ENCODE measurements at regions of chr1 and their contacts with region 1.

Region 1: GRCh38 chr1:20786253-20787028 is 666 bp downstream of the HP1BP3 start:
- DNase-seq: peak; percentile 92 to 98 (median 96)
- ATAC-seq: peak; percentile 74 to 77
- H3K4me3 Mint-ChIP-seq: peak overlapping the region; percentile 91 to 100 (median 98)
- H3K27ac Mint-ChIP-seq: peak overlapping the region; percentile 75 to 99 (median 97)
- H3K4me1 Mint-ChIP-seq: peaks cover 10 to 46% (median 32%) of the 10 kb centered on the region in 4 donors
- H3K27me3 Mint-ChIP-seq: no peaks in the 10 kb centered on the region

Region 2: DNA sequence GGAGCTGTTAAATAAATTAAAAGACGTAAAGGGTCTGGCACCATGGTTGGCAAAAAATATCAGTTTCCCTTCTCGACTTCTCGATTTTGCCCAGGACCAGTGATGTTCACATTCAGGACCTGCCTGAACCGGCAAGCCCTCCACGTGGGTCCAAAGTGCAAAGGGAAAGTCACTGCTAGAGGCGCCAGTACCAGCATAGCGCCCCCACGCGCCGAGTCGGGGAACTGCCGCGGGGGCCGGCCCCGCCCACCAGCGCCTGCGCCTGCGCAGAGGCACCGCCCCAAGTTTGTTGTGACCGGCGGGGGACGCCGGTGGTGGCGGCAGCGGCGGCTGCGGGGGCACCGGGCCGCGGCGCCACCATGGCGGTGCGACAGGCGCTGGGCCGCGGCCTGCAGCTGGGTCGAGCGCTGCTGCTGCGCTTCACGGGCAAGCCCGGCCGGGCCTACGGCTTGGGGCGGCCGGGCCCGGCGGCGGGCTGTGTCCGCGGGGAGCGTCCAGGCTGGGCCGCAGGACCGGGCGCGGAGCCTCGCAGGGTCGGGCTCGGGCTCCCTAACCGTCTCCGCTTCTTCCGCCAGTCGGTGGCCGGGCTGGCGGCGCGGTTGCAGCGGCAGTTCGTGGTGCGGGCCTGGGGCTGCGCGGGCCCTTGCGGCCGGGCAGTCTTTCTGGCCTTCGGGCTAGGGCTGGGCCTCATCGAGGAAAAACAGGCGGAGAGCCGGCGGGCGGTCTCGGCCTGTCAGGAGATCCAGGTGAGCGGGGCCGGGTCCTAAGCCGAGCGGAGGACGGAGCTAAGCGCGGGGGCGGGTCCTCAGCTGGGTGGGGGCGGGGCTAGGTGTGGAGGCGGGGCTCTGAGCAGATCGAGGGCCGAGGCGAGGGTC is 153.0 kb before region 1 on chr1 and contains the start of gene PINK1:
- POLR2A ChIA-PET with region 1: interaction called, 13 read pairs
- DNase-seq: peak; percentile 83 to 98 (median 87)
- ATAC-seq: peak; percentile 88
- H3K4me3 Mint-ChIP-seq: peak within 1 kb of the TSS; percentile 89 to 97 (median 95)
- H3K27ac Mint-ChIP-seq: peak within 1 kb of the TSS in 9 of 10 donors; percentile 83 to 96 (median 95)
- H3K4me1 Mint-ChIP-seq: peaks cover 8 to 24% (median 13%) of the 10 kb centered on the region in 4 donors
- H3K27me3 Mint-ChIP-seq: no peaks in the 10 kb centered on the region
- polyA plus RNA-seq, gene PINK1: 18.4 to 26.3 (median 19.5) TPM

Region 3: GRCh38 chr1:20661207-20662109 is 125.0 kb before region 1 on chr1 and contains the start of gene DDOST:
- POLR2A ChIA-PET with region 1: interaction called, 23 read pairs
- DNase-seq: peak; percentile 85 to 97 (median 94)
- ATAC-seq: peak; percentile 96
- H3K4me3 Mint-ChIP-seq: peak within 1 kb of the TSS; percentile 97 to 100 (median 99)
- H3K27ac Mint-ChIP-seq: peak within 1 kb of the TSS; percentile 97 to 99 (median 99)
- H3K4me1 Mint-ChIP-seq: peaks cover 33 to 54% (median 53%) of the 10 kb centered on the region in 4 donors
- H3K27me3 Mint-ChIP-seq: no peaks in the 10 kb centered on the region
- polyA plus RNA-seq, gene DDOST: 209 to 255 (median 225) TPM

Region 4: DNA sequence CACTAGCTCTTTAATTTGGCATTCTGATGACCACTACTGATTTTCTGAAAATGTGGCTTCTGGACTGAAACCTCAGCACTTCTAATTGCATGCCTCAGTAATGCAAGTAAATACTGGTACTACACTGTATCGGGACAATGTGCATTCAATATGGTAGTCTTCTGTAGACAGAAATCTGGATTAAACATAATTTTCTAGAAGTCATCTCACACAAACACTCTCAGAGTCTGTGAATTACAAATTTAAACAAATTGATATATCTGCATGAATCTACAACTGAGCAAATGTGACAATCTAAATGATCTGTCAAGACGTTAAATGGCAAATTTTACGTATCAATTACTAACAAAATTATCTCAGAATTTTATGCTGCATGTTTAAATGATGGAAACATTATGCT is 23.0 kb before region 1 on chr1:
- POLR2A ChIA-PET with region 1: interaction called, 12 read pairs
- DNase-seq: no peak
- ATAC-seq: no peak
- H3K4me3 Mint-ChIP-seq: no peak overlapping the region
- H3K27ac Mint-ChIP-seq: no peak overlapping the region
- H3K4me1 Mint-ChIP-seq: peaks cover 0 to 10% (median under 1%) of the 10 kb centered on the region in 4 donors
- H3K27me3 Mint-ChIP-seq: no peaks in the 10 kb centered on the region

Region 5: GRCh38 chr1:20840731-20841130 is 54.3 kb after region 1 on chr1:
- POLR2A ChIA-PET with region 1: no interaction called
- DNase-seq: no peak
- ATAC-seq: no peak
- H3K4me3 Mint-ChIP-seq: no peak overlapping the region
- H3K27ac Mint-ChIP-seq: no peak overlapping the region
- H3K4me1 Mint-ChIP-seq: no peaks in the 10 kb centered on the region
- H3K27me3 Mint-ChIP-seq: no peaks in the 10 kb centered on the region

Measured in naive thymus-derived CD8-positive, alpha-beta T cell (primary cell).